Activated CD4-positive, alpha-beta T cell treated with anti-CD3 and anti-CD28 coated beads, Interleukin-2, amount 10 ng/mL, durations not matched to agents 24 days and 14 days (primary cell): ENCODE measurements at regions of chr2 and their contacts with region 1.

Region 1: DNA sequence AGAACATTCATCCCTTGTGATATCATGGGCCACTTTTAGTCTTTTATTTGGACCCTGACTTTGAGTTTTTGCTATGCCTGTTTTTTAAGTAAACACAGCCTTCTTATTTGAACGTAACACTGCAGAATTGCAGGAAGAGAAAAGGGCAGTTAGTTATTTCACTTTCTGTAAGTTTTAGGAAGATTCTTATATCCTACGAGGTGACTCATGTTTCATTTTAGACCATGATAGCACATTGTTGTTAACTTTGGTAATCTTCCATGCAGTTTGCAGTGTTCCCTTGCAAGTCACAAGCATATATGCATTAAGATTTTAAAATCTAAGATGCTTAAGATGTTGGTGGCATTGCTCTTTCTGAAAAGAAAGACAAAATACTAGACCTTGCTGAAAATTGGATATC is 128.6 kb upstream of the EPC2 start:
- DNase-seq: no peak
- H3K4me3 Mint-ChIP-seq: peak overlapping the region; percentile 33
- H3K27ac Mint-ChIP-seq: peak overlapping the region; percentile 26
- H3K4me1 Mint-ChIP-seq: peaks cover 39% of the 10 kb centered on the region
- H3K27me3 Mint-ChIP-seq: no peaks in the 10 kb centered on the region

Region 2: DNA sequence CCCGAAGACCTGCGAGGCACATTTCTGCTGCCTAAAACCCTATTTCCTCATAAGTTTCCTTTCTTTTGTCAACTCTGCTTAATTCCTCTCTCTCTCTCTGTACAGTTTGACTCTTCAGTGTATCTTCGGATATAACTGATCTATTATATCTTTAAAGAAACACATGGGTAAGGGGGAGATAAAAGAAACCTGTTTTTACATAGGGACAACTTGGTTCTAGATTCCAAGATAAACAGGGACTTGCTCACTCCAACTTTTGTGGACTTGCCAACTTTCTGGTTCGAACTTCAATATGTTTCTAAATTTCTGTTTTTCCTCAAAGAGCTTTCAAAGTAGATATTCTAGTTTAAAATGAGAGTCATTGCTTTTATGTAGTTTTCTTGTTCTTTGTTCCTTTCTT is 54.1 kb before region 1 on chr2:
- intact Hi-C with region 1: loop called (anchors 2 kb)
- DNase-seq: no peak
- H3K4me3 Mint-ChIP-seq: no peak overlapping the region
- H3K27ac Mint-ChIP-seq: no peak overlapping the region
- H3K4me1 Mint-ChIP-seq: no peaks in the 10 kb centered on the region
- H3K27me3 Mint-ChIP-seq: no peaks in the 10 kb centered on the region